ENCODE measurements at regions of chr6 and their contacts with region 1.

Region 1: GRCh38 chr6:158373214-158373613 is 60.9 kb downstream of the TULP4 start:
- DNase-seq: no peak
- ATAC-seq: no peak
- H3K4me3 ChIP-seq: no peak overlapping the region
- H3K4me3 Mint-ChIP-seq: no peak overlapping the region
- H3K27ac ChIP-seq: no peak overlapping the region
- H3K27ac Mint-ChIP-seq: no peak overlapping the region
- H3K4me1 ChIP-seq: no peaks in the 10 kb centered on the region
- H3K4me1 Mint-ChIP-seq: peaks cover 5 to 20% (median 11%) of the 10 kb centered on the region in 3 donors
- H3K27me3 ChIP-seq: no peaks in the 10 kb centered on the region
- H3K27me3 Mint-ChIP-seq: no peaks in the 10 kb centered on the region

Region 2: GRCh38 chr6:158268361-158269147 is 104.7 kb before region 1 on chr6:
- CTCF ChIA-PET with region 1: no interaction called
- POLR2A ChIA-PET with region 1: interaction called in 1 of 2 experiments, 10 read pairs
- DNase-seq: no peak
- ATAC-seq: no peak
- H3K4me3 ChIP-seq: no peak overlapping the region
- H3K4me3 Mint-ChIP-seq: no peak overlapping the region
- H3K27ac ChIP-seq: no peak overlapping the region
- H3K27ac Mint-ChIP-seq: no peak overlapping the region
- H3K4me1 ChIP-seq: peaks cover 8 to 16% of the 10 kb centered on the region in 2 experiments
- H3K4me1 Mint-ChIP-seq: peaks cover 33 to 34% (median 34%) of the 10 kb centered on the region in 3 donors
- H3K27me3 ChIP-seq: no peaks in the 10 kb centered on the region
- H3K27me3 Mint-ChIP-seq: no peaks in the 10 kb centered on the region

Region 3: GRCh38 chr6:158744986-158745430 is 371.8 kb after region 1 on chr6:
- CTCF ChIA-PET with region 1: no interaction called
- POLR2A ChIA-PET with region 1: no interaction called
- DNase-seq: no peak
- ATAC-seq: no peak
- H3K4me3 ChIP-seq: no peak overlapping the region
- H3K4me3 Mint-ChIP-seq: no peak overlapping the region
- H3K27ac ChIP-seq: no peak overlapping the region
- H3K27ac Mint-ChIP-seq: peak overlapping the region in 1 of 2 donors; percentile 19
- H3K4me1 ChIP-seq: no peaks in the 10 kb centered on the region
- H3K4me1 Mint-ChIP-seq: no peaks in the 10 kb centered on the region
- H3K27me3 ChIP-seq: no peaks in the 10 kb centered on the region
- H3K27me3 Mint-ChIP-seq: no peaks in the 10 kb centered on the region

Region 4: GRCh38 chr6:159904497-159904911 is 1531.3 kb after region 1 on chr6:
- CTCF ChIA-PET with region 1: no interaction called
- POLR2A ChIA-PET with region 1: no interaction called
- DNase-seq: no peak
- ATAC-seq: no peak
- H3K4me3 ChIP-seq: no peak overlapping the region
- H3K4me3 Mint-ChIP-seq: no peak overlapping the region
- H3K27ac ChIP-seq: no peak overlapping the region
- H3K27ac Mint-ChIP-seq: no peak overlapping the region
- H3K4me1 ChIP-seq: no peaks in the 10 kb centered on the region
- H3K4me1 Mint-ChIP-seq: no peaks in the 10 kb centered on the region
- H3K27me3 ChIP-seq: peaks cover 0 to 3% of the 10 kb centered on the region in 2 experiments
- H3K27me3 Mint-ChIP-seq: no peaks in the 10 kb centered on the region